ENCODE measurements at regions of chr2 and their contacts with region 1.

Region 1: DNA sequence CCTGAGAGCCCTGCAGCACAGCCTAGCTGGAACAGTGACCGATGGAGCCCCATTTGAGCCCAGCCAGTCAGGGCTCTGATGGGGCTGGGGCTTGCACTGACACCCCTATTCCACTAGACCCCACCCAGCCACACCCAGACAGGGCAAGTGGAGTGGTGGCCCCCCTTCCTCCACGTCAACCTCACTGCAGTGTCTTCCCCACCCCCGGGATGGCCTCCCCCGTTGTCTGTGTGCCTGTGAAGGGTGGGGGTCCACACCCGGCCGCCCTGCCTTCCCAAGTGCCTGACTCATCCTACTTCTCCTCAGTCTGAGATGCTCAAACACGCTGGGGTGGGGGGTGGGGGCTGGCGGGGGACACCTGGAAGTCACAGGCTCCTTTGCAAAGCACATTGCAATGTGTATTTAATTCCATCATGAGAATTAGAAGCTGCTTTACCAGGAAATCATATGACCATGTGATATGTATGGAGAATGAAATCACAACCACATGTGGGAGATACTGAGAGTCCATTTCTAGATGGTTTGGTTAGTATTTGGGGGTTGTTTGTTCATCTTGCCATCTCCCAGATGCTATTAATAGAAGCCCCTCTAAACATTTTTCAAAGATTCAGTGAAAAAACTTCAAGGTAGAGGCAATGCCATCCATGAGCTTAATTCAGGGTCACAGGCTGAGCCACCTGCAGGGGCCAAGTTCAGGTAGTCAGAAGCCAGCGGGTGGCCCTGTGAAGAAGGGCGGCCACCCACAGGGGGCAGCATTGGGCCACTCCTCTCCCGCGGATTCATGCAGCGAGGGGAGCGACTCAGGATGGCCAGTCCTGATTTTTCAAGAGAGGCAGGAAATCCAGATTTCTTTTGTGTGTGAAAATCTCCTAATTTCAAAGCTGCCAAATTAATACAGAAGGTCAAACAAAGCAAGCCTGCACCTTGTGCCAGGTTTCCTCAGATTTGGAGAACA is 22.7 kb upstream of the GMPPA start:
- DNase-seq: no peak
- H3K4me3 ChIP-seq: no peak overlapping the region
- H3K27ac ChIP-seq: no peak overlapping the region
- H3K4me1 ChIP-seq: no peaks in the 10 kb centered on the region
- H3K27me3 ChIP-seq: no peaks in the 10 kb centered on the region
- CTCF ChIP-seq: peak; percentile 54 to 65

Region 2: DNA sequence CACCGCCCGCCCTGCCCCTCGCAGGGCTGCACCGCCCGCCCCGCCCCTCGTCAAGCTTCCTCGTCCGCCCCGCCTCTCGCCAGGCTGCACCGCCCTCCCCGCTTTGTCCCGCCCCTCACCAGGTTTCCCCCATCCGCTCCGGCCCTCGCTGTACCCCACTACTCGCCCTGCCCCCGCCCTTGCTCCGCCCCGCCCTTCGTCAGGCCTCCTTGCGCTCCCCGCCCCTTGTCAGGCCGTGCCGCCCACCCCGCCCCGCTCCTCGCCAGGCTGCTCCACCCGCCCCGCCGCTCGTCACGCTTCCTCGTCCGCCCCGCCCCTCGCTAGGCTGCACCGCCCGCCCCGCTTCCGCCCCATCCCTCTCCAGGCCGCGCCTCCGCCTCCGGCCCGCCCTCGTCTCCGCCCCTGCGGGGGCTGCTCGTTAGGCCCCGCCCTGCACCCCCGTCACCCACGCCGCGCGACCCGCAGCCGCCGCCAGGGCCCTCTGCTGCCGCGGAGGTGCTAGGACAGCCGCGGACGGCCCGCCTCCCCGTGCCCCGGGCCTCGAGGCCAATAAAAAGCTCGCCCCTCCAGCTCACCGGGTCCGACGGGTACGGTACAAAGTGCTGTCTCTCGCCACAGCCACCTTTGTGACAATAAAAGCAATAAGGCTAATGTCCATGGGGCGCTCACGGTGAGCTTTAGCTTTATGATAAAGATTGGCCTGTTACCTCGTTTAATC is 87.7 kb before region 1 on chr2:
- CTCF ChIA-PET with region 1: interaction called, 31 read pairs
- dilution Hi-C with region 1: no loop called
- in situ Hi-C with region 1: no loop called
- intact Hi-C with region 1: no loop called
- DNase-seq: peak; percentile 91
- H3K4me3 ChIP-seq: peak overlapping the region; percentile 33 to 48 (median 46)
- H3K27ac ChIP-seq: no peak overlapping the region
- H3K4me1 ChIP-seq: peaks cover 15% of the 10 kb centered on the region
- H3K27me3 ChIP-seq: no peaks in the 10 kb centered on the region
- CTCF ChIP-seq: peak; percentile 20 to 44

Region 3: DNA sequence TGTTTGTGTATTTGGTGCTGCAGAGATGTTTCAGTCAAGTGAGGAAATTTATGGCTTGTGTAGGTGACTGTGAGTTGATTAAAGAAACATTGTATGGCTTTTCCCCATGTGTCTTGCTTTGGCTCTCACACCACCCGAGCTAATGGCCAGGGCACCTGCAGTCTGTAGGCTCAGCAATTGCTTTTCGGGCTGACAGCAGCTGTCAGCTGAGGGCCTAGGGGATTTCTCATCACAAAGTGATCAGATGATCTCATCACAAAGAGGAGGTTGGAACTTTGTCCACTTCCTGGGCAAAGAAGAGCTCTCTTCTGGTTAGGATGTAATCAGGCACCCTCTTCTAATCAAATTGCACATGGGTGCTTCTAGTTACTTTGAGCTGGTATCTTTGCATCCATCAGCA is 783.7 kb after region 1 on chr2:
- CTCF ChIA-PET with region 1: no interaction called
- dilution Hi-C with region 1: no loop called
- in situ Hi-C with region 1: no loop called
- intact Hi-C with region 1: no loop called
- DNase-seq: no peak
- H3K4me3 ChIP-seq: no peak overlapping the region
- H3K27ac ChIP-seq: no peak overlapping the region
- H3K4me1 ChIP-seq: no peaks in the 10 kb centered on the region
- H3K27me3 ChIP-seq: no peaks in the 10 kb centered on the region
- CTCF ChIP-seq: no peak

Measured in mammary epithelial cell (primary cell).